Activated naive CD8-positive, alpha-beta T cell treated with anti-CD3 and anti-CD28 coated beads, Interleukin-2, amount 10 ng/mL, durations not matched to agents 7 days and 5 days (primary cell): ENCODE measurements at regions of chr6 and their contacts with region 1.

Region 1: DNA sequence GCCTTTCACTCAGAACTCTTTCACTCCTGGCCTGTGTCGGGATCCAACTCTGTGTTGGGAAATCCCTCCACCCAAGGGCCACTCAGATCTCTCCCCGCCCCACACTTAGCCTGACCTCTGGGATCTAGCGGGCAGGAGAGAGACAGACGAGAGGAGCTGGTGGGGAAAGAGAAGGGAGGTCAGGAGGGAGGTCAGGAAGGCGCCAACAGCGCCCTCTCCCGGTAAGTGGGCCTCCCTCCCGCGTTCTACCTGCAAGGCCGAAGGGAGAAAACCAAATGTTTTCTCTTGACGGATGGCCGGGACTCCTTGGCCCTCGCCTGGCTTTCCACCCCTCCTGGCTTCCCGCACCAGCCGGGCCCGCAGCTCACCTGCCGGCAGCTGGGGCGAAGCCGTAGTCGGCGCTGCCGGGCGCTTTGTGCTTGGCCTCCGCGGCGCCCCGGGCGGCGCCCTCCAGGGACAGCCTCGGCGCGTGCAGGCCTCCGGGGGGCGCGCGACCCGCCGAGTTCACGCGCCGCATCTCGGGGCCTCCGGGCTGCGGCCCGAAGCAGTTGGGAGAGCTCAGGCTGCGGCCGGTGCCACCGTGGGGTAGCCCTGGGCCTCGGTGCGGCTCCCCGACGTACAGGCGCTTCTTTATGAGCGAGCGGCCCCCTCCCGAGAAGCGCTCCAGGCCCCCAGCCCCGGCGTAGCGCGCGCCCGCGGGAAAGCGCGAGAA is 38.2 kb downstream of the C6orf132 start:
- DNase-seq: peak; percentile 89
- ATAC-seq: peak; percentile 91
- H3K4me3 Mint-ChIP-seq: peak overlapping the region; percentile 81
- H3K27ac Mint-ChIP-seq: peak overlapping the region; percentile 74
- H3K4me1 Mint-ChIP-seq: peaks cover 19% of the 10 kb centered on the region
- H3K27me3 Mint-ChIP-seq: peaks cover 8% of the 10 kb centered on the region

Region 2: GRCh38 chr6:42050266-42051032 is 53.8 kb before region 1 on chr6 and contains the start of gene TAF8:
- POLR2A ChIA-PET with region 1: interaction called, 16 read pairs
- DNase-seq: peak; percentile 92
- ATAC-seq: peak; percentile 75
- H3K4me3 Mint-ChIP-seq: peak within 1 kb of the TSS; percentile 97
- H3K27ac Mint-ChIP-seq: peak within 1 kb of the TSS; percentile 99
- H3K4me1 Mint-ChIP-seq: peaks cover 55% of the 10 kb centered on the region
- H3K27me3 Mint-ChIP-seq: no peaks in the 10 kb centered on the region
- total RNA-seq, gene TAF8: 46.2 to 50.4 TPM

Region 3: DNA sequence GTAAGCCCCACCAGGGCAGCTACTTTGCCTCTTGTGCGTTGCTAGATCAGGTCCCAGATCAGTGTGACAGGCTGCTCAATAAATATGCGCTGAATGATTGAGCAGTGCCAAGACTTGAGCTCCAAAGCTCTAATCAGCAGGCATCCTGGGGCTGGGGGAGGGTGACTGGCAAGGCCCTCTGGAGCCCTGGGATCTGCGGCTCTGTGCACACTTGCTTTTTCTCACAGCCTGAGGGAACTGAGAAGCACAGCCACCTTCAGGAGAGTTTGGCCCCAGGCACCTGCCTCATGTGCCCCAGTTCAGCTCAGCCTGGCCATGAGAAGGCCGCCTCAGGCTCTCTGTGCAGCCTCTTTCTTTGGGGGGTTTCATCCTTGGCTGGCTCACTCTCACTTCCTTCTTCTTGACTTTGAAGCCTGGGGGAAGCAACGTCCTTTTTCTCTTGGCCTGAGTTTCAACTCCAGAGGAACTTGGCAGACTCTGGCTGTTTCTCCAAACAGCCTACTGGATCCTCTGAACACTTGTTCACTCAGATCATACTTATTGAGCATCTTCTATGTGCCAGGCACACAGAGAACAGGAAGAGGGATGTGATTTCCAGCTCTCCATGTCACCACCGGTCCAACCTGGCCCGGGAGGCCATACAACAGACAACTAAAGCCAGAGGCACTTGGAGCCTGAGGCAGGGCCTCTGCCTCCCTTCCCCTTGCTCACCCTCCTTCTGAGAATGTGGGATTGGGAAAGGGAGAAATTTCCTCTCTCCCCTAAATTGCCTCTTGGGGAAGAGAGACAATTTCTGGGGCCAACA is 1779.8 kb after region 1 on chr6:
- POLR2A ChIA-PET with region 1: no interaction called
- DNase-seq: no peak
- ATAC-seq: no peak
- H3K4me3 Mint-ChIP-seq: no peak overlapping the region
- H3K27ac Mint-ChIP-seq: no peak overlapping the region
- H3K4me1 Mint-ChIP-seq: no peaks in the 10 kb centered on the region
- H3K27me3 Mint-ChIP-seq: no peaks in the 10 kb centered on the region